RWPE1 (cell line): ENCODE measurements at regions of chr7 and their contacts with region 1.

Region 1: DNA sequence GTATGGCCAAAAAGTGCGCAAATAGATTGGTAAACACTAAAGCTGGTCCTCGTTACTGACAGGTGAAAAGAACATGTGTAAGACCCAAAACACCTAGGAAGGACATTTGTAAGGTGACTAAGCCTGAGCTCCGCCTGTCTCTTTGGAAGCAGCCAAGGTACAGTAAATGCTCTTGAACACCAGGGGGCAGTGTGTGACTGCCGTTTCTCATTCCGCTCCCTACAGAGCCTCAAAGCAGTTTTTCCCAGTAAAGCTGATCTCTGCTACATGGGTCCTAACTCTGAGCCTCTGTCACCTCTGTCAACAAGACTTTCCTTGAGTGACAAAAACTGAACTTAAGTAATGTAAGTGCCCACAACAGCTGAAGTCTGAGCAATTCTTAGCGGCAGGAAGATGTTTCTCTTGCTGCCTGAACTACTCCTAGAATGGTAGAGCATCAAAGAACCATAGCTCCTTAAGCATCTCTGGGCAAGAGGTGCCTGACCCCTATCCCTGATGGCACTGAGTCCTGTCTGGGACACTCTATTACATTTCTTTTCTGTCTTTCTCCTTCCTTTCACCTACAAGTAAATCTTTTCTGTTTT is 238.0 kb upstream of the INHBA start:
- DNase-seq: peak; percentile 75
- H3K27ac ChIP-seq: no peak overlapping the region
- CTCF ChIP-seq: peak; percentile 92

Region 2: GRCh38 chr7:41955893-41956675 is 15.2 kb after region 1 on chr7:
- CTCF ChIA-PET with region 1: interaction called, 16 read pairs
- POLR2A ChIA-PET with region 1: no interaction called
- DNase-seq: peak; percentile 98
- H3K27ac ChIP-seq: peak overlapping the region; percentile 84
- CTCF ChIP-seq: no peak

Region 3: GRCh38 chr7:42017349-42017986 is 76.6 kb after region 1 on chr7:
- CTCF ChIA-PET with region 1: no interaction called
- POLR2A ChIA-PET with region 1: no interaction called
- DNase-seq: no peak
- H3K27ac ChIP-seq: no peak overlapping the region
- CTCF ChIP-seq: no peak

Region 4: GRCh38 chr7:42053834-42054233 is 113.0 kb after region 1 on chr7:
- CTCF ChIA-PET with region 1: no interaction called
- POLR2A ChIA-PET with region 1: no interaction called
- DNase-seq: no peak
- H3K27ac ChIP-seq: no peak overlapping the region
- CTCF ChIP-seq: no peak

Region 5: GRCh38 chr7:42227936-42228591 is 287.2 kb after region 1 on chr7:
- CTCF ChIA-PET with region 1: no interaction called
- POLR2A ChIA-PET with region 1: no interaction called
- DNase-seq: no peak
- H3K27ac ChIP-seq: peak overlapping the region; percentile 39
- CTCF ChIP-seq: no peak

Region 6: GRCh38 chr7:42469341-42469740 is 528.5 kb after region 1 on chr7:
- CTCF ChIA-PET with region 1: interaction called, 10 read pairs
- POLR2A ChIA-PET with region 1: no interaction called
- DNase-seq: no peak
- H3K27ac ChIP-seq: no peak overlapping the region
- CTCF ChIP-seq: no peak

Region 7: DNA sequence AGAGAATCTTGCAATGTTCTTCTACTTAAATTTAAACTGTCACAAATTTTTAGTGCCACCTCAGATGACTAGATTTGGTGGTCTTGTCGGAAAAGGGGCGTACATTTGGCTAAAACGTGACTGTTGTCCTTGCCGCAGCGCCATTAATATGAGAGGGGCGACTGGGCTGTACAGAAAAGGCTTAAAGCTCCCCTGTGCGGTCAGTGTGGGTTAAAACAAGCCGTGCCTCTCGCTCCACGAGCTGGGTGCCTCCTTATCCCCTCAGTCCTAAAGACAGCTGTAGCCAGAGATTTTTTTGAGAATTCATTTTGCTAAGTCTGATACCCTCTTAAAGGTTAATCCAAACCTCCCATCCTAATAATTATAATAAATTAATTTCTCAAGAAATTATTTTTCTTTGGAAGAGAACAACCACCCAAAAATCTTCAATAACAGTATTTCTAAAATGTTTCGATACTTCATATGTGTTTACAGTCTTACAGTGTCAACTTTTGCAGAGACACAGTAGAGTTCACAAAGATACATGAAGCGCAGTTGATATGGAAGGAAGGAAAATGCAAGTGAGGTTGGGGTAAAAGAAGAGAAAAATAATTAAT is 902.5 kb after region 1 on chr7:
- CTCF ChIA-PET with region 1: interaction called, 24 read pairs
- POLR2A ChIA-PET with region 1: no interaction called
- DNase-seq: peak; percentile 53
- H3K27ac ChIP-seq: no peak overlapping the region
- CTCF ChIP-seq: peak; percentile 77

Region 8: GRCh38 chr7:42876182-42877068 is 935.6 kb after region 1 on chr7:
- CTCF ChIA-PET with region 1: interaction called, 13 read pairs
- POLR2A ChIA-PET with region 1: no interaction called
- DNase-seq: peak; percentile 57
- H3K27ac ChIP-seq: no peak overlapping the region
- CTCF ChIP-seq: peak; percentile 91